Uterus (tissue), 4 donors: ENCODE measurements at regions of chr16 and their contacts with region 1.

Region 1: DNA sequence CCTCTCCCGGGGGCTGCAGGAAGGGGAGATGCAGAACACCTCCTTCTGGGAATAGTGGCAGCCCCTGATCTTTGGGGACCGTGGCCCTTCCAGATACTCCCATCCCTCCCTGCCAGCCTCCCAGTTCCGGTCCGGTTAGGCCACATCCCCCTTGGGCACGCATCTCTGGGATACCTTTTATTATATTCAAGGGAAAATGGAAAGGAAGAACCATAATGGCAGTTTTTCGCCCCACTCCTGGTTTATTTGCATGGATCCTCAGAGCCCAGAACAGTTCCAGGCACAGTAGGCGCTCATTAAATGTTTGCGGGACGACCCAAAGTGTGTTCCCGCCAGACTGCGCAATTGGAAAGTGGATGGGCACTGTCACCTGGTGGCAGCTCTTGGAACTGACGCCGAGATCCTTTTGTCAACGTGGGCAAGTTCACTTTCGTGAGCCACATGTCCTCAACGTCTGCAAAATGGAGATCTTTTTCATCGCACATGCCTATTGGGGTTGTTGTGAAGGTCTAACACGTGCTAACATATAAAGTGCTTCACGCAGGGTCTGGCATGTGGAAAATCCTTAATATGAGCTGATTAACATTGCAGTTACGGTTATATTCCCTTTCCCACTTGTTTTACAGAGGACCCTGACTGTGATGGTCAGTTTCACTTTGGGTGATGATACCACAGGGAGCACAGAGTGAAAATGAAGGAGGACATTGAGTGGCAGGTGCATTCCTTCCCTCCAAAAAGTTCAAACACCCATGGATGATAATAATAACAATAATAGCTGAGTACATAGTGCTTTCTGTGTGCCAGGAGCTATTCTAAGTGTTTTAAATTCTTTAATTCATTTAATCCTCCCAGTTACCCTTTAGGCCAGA is 1.7 kb upstream of the GPRC5B start:
- DNase-seq: peak; percentile 74 to 83
- H3K4me3 ChIP-seq: peak overlapping the region; percentile 49 to 79
- H3K27ac ChIP-seq: peak overlapping the region; percentile 41 to 63
- H3K4me1 ChIP-seq: peaks cover 0 to 4% of the 10 kb centered on the region in 2 donors
- H3K27me3 ChIP-seq: no peaks in the 10 kb centered on the region
- CTCF ChIP-seq: peak; percentile 99
- POLR2A ChIP-seq: no peak

Region 2: GRCh38 chr16:19595043-19595767 is 291.1 kb before region 1 on chr16:
- intact Hi-C with region 1: loop called (anchors 10 kb)
- DNase-seq: peak in 1 of 2 donors; percentile 20
- H3K4me3 ChIP-seq: no peak overlapping the region
- H3K27ac ChIP-seq: no peak overlapping the region
- H3K4me1 ChIP-seq: no peaks in the 10 kb centered on the region
- H3K27me3 ChIP-seq: no peaks in the 10 kb centered on the region
- CTCF ChIP-seq: no peak
- POLR2A ChIP-seq: no peak

Region 3: DNA sequence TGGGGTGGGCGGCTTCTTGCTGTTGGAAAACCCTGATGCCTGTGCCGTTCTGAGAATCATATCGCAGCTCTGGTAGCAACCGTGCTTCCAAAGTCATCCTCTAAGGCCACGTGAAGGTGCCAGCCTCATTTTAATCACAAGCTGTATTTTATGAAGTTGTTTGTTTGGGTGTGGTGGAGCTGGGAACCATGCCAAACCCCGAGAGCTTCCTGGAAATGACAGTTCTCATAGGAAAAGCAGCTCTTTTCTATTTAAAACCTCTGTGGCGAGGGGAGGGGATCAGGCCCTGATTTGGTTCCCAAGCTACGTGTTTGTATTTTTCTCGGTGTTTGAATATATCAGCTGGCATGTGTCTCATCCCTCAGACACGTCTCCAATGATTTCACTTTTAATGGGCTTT is 190.0 kb before region 1 on chr16:
- intact Hi-C with region 1: loop called (anchors 10 kb)
- DNase-seq: peak; percentile 71 to 80
- H3K4me3 ChIP-seq: no peak overlapping the region
- H3K27ac ChIP-seq: peak overlapping the region; percentile 68 to 85
- H3K4me1 ChIP-seq: peaks cover 0 to 4% of the 10 kb centered on the region in 2 donors
- H3K27me3 ChIP-seq: no peaks in the 10 kb centered on the region
- CTCF ChIP-seq: no peak
- POLR2A ChIP-seq: peak in 1 of 2 donors; percentile 24

Region 4: GRCh38 chr16:19831678-19832077 is 54.6 kb before region 1 on chr16:
- intact Hi-C with region 1: no loop called
- DNase-seq: no peak
- H3K4me3 ChIP-seq: no peak overlapping the region
- H3K27ac ChIP-seq: peak overlapping the region; percentile 34 to 74
- H3K4me1 ChIP-seq: no peaks in the 10 kb centered on the region
- H3K27me3 ChIP-seq: no peaks in the 10 kb centered on the region
- CTCF ChIP-seq: no peak
- POLR2A ChIP-seq: no peak